Calu3 (cell line): ENCODE measurements at regions of chr2 and their contacts with region 1.

Region 1: GRCh38 chr2:205808486-205809121 is 126.3 kb downstream of the NRP2 start:
- DNase-seq: no peak
- H3K4me3 Mint-ChIP-seq: no peak overlapping the region
- H3K27ac Mint-ChIP-seq: no peak overlapping the region
- H3K4me1 Mint-ChIP-seq: peaks cover 17% of the 10 kb centered on the region
- H3K27me3 Mint-ChIP-seq: no peaks in the 10 kb centered on the region
- CTCF ChIP-seq: no peak

Region 2: GRCh38 chr2:205585449-205586383 is 222.9 kb before region 1 on chr2:
- CTCF ChIA-PET with region 1: no interaction called
- intact Hi-C with region 1: no loop called
- DNase-seq: no peak
- H3K4me3 Mint-ChIP-seq: no peak overlapping the region
- H3K27ac Mint-ChIP-seq: no peak overlapping the region
- H3K4me1 Mint-ChIP-seq: no peaks in the 10 kb centered on the region
- H3K27me3 Mint-ChIP-seq: no peaks in the 10 kb centered on the region
- CTCF ChIP-seq: no peak

Region 3: GRCh38 chr2:205766779-205767359 is 41.7 kb before region 1 on chr2:
- CTCF ChIA-PET with region 1: no interaction called
- intact Hi-C with region 1: loop called (anchors 2 kb)
- DNase-seq: peak; percentile 69
- H3K4me3 Mint-ChIP-seq: no peak overlapping the region
- H3K27ac Mint-ChIP-seq: peak overlapping the region; percentile 52
- H3K4me1 Mint-ChIP-seq: peaks cover 57% of the 10 kb centered on the region
- H3K27me3 Mint-ChIP-seq: no peaks in the 10 kb centered on the region
- CTCF ChIP-seq: peak; percentile 83